ENCODE measurements at regions of chr9 and their contacts with region 1.

Region 1: DNA sequence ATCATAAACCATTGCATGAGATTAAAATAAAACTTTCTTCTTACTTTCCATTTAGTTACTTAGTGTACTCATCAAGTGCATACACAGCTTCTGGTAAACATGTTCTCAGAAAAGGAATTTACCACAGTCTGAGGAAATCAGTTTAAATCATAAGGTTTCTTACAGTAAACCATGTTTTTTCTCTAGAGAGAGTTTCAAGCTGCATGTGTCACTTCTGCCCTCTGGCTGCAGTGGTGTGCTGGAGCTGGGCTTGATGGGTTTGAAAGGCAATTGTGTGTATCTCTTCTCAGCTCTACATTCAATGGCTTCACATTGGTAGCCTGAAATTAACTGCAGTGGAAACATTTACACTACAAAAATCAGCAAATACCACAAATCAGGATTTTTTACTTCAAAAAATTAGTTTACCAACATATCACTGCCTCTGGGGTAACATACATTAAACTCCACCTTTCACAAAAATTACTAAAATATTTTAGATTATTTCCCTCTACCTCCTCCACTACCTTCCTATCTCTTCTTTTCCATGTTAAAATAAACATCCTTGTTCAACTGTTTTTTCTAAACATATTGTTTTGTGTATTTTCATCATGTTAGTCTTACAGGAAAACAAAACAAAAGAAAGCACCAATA is 414.3 kb downstream of the ANXA1 start:
- DNase-seq: peak in 2 of 3 donors; percentile 38 to 49
- ATAC-seq: peak; percentile 88 to 94 (median 92)
- H3K4me3 ChIP-seq: no peak overlapping the region
- H3K27ac ChIP-seq: no peak overlapping the region
- H3K4me1 ChIP-seq: no peaks in the 10 kb centered on the region
- H3K27me3 ChIP-seq: no peaks in the 10 kb centered on the region
- CTCF ChIP-seq: peak; percentile 72 to 89 (median 80)
- POLR2A ChIP-seq: no peak

Region 2: GRCh38 chr9:72807765-72808445 is 758.0 kb before region 1 on chr9:
- intact Hi-C with region 1: no loop called
- DNase-seq: no peak
- ATAC-seq: no peak
- H3K4me3 ChIP-seq: no peak overlapping the region
- H3K27ac ChIP-seq: no peak overlapping the region
- H3K4me1 ChIP-seq: no peaks in the 10 kb centered on the region
- H3K27me3 ChIP-seq: no peaks in the 10 kb centered on the region
- CTCF ChIP-seq: peak in 1 of 4 donors; percentile 28
- POLR2A ChIP-seq: no peak

Region 3: DNA sequence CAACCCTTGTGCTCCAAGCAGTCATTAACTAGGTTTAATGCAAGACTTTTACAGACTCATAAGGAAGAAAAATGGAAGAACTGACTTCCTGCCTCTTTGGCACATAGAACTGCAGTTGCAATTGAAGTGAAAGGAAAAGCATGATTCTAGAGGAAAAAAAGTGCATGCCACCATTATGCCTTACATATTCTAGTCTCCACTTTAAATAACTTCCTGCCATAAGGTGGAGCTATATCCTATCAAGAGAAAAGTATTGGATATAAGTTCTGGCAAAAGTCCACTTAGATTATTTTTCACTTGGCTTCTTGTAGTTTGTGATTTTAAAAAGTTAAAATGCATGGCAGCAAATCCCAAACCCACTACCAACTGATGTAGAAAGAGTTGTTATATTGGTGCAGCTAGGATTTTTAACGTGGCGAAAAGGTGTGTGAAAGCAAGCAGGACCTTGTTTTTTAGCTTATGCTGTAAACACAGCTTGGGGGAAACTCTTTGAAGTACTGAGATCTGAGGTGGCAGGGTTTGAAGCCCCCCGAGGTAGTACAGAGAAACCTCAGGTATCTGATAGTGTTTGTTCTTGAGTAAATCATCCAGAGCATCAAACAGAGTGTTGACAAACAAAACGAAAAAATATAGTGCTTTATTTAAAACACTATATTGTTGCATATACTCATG is 296.4 kb before region 1 on chr9:
- intact Hi-C with region 1: loop called in 1 of 2 experiments (anchors 10 kb)
- DNase-seq: no peak
- ATAC-seq: peak; percentile 50 to 63 (median 60)
- H3K4me3 ChIP-seq: no peak overlapping the region
- H3K27ac ChIP-seq: no peak overlapping the region
- H3K4me1 ChIP-seq: no peaks in the 10 kb centered on the region
- H3K27me3 ChIP-seq: no peaks in the 10 kb centered on the region
- CTCF ChIP-seq: peak; percentile 26 to 41 (median 38)
- POLR2A ChIP-seq: no peak

Region 4: GRCh38 chr9:73643379-73644013 is 77.5 kb after region 1 on chr9:
- intact Hi-C with region 1: no loop called
- DNase-seq: no peak
- ATAC-seq: no peak
- H3K4me3 ChIP-seq: no peak overlapping the region
- H3K27ac ChIP-seq: no peak overlapping the region
- H3K4me1 ChIP-seq: no peaks in the 10 kb centered on the region
- H3K27me3 ChIP-seq: no peaks in the 10 kb centered on the region
- CTCF ChIP-seq: no peak
- POLR2A ChIP-seq: no peak

Region 5: GRCh38 chr9:73816905-73817304 is 251.0 kb after region 1 on chr9:
- intact Hi-C with region 1: no loop called
- DNase-seq: no peak
- ATAC-seq: no peak
- H3K4me3 ChIP-seq: no peak overlapping the region
- H3K27ac ChIP-seq: no peak overlapping the region
- H3K4me1 ChIP-seq: no peaks in the 10 kb centered on the region
- H3K27me3 ChIP-seq: peaks cover 0 to 5% of the 10 kb centered on the region in 2 donors
- CTCF ChIP-seq: no peak
- POLR2A ChIP-seq: no peak